ENCODE measurements at regions of chr11 and their contacts with region 1.

Region 1: DNA sequence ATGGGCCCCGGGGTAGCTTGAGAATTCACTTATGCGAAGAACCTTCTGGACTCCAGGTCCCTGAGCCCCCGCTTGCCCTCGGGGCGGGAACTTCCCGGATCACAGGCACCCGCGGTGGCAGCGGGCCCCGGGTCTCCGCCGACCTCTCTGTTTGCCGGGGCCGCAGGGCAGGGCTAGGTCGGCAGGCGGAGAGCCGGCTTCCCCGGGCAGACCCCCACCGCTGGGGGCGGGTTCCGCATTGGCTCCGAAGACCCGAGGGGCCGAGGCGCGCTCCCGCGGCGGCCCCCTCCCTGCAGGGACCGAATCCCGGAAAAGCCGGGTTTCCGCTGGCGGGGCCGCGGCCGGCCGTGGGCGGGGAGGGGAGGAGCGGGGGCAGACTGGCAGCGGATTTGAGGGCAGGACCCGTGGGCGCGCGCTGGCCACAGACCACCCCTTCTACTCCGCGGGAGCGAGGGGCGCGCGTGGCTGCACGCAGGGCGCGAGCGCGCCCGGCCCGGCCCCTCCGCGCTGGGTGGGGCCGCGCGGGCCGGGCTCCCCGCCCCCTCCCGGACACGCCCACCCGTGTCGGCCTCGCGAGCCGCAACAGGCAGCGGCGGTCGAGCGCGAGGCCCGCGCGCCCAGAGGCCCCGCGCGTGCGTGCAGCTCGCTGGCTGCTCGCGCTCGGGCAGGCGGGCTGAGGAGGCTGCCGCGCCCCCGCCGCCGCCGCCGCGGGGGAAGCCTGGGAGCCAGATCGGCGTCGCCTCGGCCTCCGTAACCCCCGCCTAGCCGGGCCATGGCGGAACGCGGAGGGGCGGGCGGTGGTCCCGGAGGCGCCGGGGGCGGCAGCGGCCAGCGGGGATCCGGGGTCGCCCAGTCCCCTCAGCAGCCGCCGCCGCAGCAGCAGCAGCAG is at the start of gene PACS1:
- DNase-seq: peak; percentile 90
- CTCF ChIP-seq: no peak

Region 2: GRCh38 chr11:66045177-66045639 is 24.8 kb before region 1 on chr11:
- CTCF ChIA-PET with region 1: interaction called, 143 read pairs
- POLR2A ChIA-PET with region 1: no interaction called
- DNase-seq: peak; percentile 91
- CTCF ChIP-seq: peak; percentile 92

Region 3: GRCh38 chr11:66051766-66052663 is 17.9 kb before region 1 on chr11 and contains the start of gene SF3B2:
- CTCF ChIA-PET with region 1: interaction called, 143 read pairs
- POLR2A ChIA-PET with region 1: interaction called, 4 read pairs
- DNase-seq: peak; percentile 98
- CTCF ChIP-seq: no peak

Region 4: DNA sequence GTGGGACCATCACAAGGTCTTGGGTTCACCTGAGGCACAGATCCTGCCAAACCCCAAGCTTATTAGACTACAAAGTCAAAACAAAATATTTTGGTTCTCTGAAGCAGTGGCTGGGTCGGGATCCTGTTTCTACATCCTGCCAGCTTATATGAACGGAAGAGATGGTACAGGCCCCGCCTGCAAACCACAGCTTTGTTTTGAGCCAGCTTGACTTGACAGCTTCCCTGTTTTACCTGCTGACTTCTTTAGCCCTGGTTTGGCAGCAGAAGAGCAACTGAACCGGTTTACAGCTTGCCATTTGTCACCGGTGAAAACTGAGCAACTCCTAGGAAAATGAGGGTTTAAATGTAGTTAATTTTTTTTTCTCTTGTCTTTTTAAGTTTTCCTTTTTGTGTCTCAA is 11.5 kb after region 1 on chr11:
- CTCF ChIA-PET with region 1: interaction called, 62 read pairs
- POLR2A ChIA-PET with region 1: interaction called, 3 read pairs
- DNase-seq: peak; percentile 63
- CTCF ChIP-seq: no peak

Region 5: DNA sequence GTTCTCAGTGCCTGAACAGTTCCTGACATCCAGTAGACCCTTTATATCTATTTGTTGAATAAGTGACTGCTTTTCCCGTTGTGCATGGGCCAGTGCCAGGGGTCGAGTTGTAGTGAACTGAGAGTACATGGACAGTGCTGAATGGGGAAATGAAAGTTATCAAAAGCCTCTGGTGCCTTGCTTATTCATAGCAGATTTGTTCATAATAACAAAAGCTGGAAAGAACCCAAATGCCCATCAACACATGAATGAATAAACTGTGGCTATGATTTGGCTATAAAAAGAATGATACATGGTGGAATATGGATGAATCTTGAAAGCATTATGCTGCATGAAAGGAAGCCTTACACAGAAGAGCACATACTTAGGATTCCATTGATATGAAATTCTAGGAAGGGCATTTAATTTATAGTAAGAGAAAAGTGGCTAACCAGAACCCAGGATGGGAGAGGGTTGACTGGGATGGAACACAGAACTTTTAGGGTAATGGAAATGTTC is 42.7 kb after region 1 on chr11:
- CTCF ChIA-PET with region 1: interaction called, 43 read pairs
- POLR2A ChIA-PET with region 1: no interaction called
- DNase-seq: no peak
- CTCF ChIP-seq: no peak

Region 6: DNA sequence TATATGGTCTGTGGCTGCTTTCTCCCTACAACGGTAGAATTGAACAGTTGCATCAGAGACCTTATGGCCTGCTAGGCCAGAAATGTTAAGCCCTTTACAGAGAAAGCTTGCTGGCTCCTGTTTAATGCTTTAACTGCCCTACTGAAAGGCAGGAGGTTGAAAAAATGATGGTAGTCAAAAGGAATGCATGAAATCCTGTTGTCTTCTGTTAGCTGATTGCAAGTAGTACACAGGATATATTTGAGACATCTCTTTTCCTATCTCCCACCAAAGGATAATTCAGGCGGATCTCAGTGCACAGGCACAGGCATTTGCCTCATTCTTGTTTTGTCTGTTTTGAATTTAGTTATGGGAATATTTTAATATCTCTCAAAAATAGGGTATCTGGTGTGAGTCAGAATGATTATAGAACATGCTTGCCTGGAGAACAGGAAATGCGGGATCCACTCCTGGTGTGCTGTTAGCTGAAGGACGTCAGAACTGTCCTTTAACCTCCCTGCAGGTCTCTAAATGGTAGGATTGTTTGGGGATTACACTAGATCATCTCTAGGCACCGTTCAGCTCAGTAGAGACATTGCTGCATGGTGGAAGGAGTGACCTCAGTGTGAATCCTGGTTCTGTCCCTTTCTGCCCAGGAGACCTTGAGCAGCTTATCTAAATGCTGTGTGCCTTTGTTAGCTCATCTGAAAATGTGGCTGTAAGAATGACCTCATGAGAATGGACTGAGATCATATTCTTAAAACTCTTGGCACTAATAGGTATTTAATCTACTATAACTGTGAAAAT is 49.6 kb after region 1 on chr11:
- CTCF ChIA-PET with region 1: interaction called, 43 read pairs
- POLR2A ChIA-PET with region 1: no interaction called
- DNase-seq: no peak
- CTCF ChIP-seq: no peak

Region 7: GRCh38 chr11:66136752-66137123 is 66.8 kb after region 1 on chr11:
- CTCF ChIA-PET with region 1: interaction called, 40 read pairs
- POLR2A ChIA-PET with region 1: no interaction called
- DNase-seq: no peak
- CTCF ChIP-seq: no peak

Region 8: GRCh38 chr11:66207876-66208275 is 137.9 kb after region 1 on chr11:
- CTCF ChIA-PET with region 1: no interaction called
- POLR2A ChIA-PET with region 1: no interaction called
- DNase-seq: no peak
- CTCF ChIP-seq: no peak